ENCODE measurements at regions of chr7 and their contacts with region 1.

Region 1: GRCh38 chr7:51344406-51345138 is 28.0 kb upstream of the COBL start:
- DNase-seq: peak; percentile 93
- H3K4me3 Mint-ChIP-seq: peak overlapping the region; percentile 55
- H3K27ac Mint-ChIP-seq: peak overlapping the region; percentile 79
- H3K4me1 Mint-ChIP-seq: peaks cover 68% of the 10 kb centered on the region
- H3K27me3 Mint-ChIP-seq: no peaks in the 10 kb centered on the region
- CTCF ChIP-seq: no peak

Region 2: GRCh38 chr7:50939021-50939420 is 405.6 kb before region 1 on chr7:
- CTCF ChIA-PET with region 1: no interaction called
- intact Hi-C with region 1: no loop called
- DNase-seq: no peak
- H3K4me3 Mint-ChIP-seq: no peak overlapping the region
- H3K27ac Mint-ChIP-seq: no peak overlapping the region
- H3K4me1 Mint-ChIP-seq: no peaks in the 10 kb centered on the region
- H3K27me3 Mint-ChIP-seq: no peaks in the 10 kb centered on the region
- CTCF ChIP-seq: no peak

Region 3: DNA sequence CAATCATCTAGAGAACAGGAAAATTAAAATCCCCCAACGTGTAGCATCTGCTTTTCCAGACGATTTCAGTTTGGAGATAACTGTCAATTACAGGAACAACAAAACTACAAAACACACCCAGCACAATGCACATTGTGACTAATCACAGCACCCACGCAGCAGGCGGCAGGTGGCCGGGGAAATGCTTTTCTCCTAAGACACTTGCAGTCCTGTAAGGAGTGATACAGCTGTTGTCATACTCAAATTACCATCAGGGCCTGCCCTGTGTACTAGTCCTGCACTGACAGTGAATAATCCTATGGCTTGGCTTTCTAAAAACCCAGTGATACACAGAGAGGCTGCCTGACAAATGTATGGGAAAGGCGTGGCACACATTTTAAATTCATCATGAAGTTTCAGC is 65.8 kb before region 1 on chr7:
- CTCF ChIA-PET with region 1: no interaction called
- intact Hi-C with region 1: no loop called
- DNase-seq: no peak
- H3K4me3 Mint-ChIP-seq: no peak overlapping the region
- H3K27ac Mint-ChIP-seq: no peak overlapping the region
- H3K4me1 Mint-ChIP-seq: peaks cover 8% of the 10 kb centered on the region
- H3K27me3 Mint-ChIP-seq: no peaks in the 10 kb centered on the region
- CTCF ChIP-seq: no peak

Region 4: GRCh38 chr7:51299391-51300133 is 45.0 kb before region 1 on chr7:
- CTCF ChIA-PET with region 1: interaction called, 5 read pairs
- intact Hi-C with region 1: loop called (anchors 5 kb)
- DNase-seq: no peak
- H3K4me3 Mint-ChIP-seq: no peak overlapping the region
- H3K27ac Mint-ChIP-seq: no peak overlapping the region
- H3K4me1 Mint-ChIP-seq: peaks cover 26% of the 10 kb centered on the region
- H3K27me3 Mint-ChIP-seq: no peaks in the 10 kb centered on the region
- CTCF ChIP-seq: no peak

Region 5: DNA sequence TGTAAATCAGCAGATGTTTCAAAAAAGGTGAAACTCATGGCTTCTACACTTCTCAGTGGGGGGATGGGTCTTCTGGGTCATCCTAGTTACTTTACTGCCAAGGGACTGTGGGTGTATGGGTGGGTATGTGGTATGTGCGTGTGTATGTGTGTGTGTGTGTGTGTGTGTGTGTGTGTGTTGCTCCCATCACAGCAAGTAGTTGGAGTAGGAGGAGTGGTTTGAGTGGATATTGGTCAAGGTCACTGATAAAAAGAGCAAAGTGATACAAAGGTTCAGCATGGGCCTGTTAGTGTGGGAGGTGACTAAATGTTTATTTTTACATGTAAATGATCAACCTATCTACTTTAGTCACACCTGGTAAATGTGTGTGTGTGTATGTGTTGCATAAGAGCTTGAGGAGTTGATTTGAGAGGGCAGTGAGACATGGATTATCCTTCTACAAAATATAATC is 16.2 kb before region 1 on chr7:
- CTCF ChIA-PET with region 1: interaction called, 6 read pairs
- intact Hi-C with region 1: loop called (anchors 1 kb)
- DNase-seq: peak; percentile 36
- H3K4me3 Mint-ChIP-seq: no peak overlapping the region
- H3K27ac Mint-ChIP-seq: no peak overlapping the region
- H3K4me1 Mint-ChIP-seq: peaks cover 43% of the 10 kb centered on the region
- H3K27me3 Mint-ChIP-seq: no peaks in the 10 kb centered on the region
- CTCF ChIP-seq: no peak